ENCODE measurements at regions of chr16 and their contacts with region 1.

Region 1: GRCh38 chr16:68517606-68518166 is 21.4 kb upstream of the ZFP90 start:
- DNase-seq: no peak
- ATAC-seq: no peak
- H3K4me3 ChIP-seq: no peak overlapping the region
- H3K27ac ChIP-seq: no peak overlapping the region
- H3K4me1 ChIP-seq: peaks cover 0 to 9% (median 4%) of the 10 kb centered on the region in 12 donors
- H3K27me3 ChIP-seq: no peaks in the 10 kb centered on the region
- CTCF ChIP-seq: no peak
- POLR2A ChIP-seq: no peak

Region 2: GRCh38 chr16:68367030-68367429 is 150.7 kb before region 1 on chr16:
- intact Hi-C with region 1: loop called in 1 of 10 experiments (anchors 10 kb)
- DNase-seq: no peak
- ATAC-seq: peak in 2 of 4 donors; percentile 18 to 40
- H3K4me3 ChIP-seq: no peak overlapping the region
- H3K27ac ChIP-seq: no peak overlapping the region
- H3K4me1 ChIP-seq: peaks cover 0 to 23% (median 0%) of the 10 kb centered on the region in 12 donors
- H3K27me3 ChIP-seq: peaks cover 0 to 18% (median 0%) of the 10 kb centered on the region in 9 donors
- CTCF ChIP-seq: peak in 9 of 12 donors; percentile 22 to 57 (median 43)
- POLR2A ChIP-seq: no peak